AG04449 (cell line): ENCODE measurements at regions of chr11 and their contacts with region 1.

Region 1: GRCh38 chr11:925496-926321 is at the start of gene AP2A2:
- DNase-seq: no peak
- H3K4me3 ChIP-seq: peak within 1 kb of the TSS; percentile 79
- CTCF ChIP-seq: peak; percentile 75

Region 2: DNA sequence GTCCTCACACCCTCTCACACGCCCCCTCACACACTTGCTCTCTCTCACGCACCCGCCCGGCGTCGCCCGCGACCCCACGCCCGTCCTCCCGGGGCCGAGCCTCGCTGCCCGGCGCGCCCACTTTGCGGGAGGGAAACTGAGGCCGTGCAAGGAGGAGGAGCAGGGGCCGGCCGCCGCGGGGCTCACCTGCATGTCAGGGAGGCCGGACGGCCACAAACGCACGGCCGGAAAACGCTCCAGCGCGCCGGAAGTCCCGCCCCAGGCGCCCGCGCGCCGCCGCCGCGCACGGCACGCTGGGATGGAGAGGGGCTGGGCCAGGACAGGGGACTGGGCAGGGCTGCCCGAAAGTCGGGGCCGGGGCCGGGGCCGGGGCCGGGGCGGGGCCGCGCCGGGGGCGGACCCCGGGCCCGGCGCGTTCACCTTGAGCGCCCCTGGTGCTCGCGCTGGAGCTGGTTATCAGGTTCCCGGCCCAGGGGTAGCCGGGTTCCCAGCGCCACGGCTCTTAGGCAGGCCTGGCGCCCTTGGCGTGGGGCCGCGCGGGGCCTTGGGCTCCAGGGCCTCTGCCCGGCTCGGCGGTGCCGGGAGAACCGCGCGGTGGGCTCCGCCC is 15.0 kb before region 1 on chr11 and contains the start of gene CHID1:
- CTCF ChIA-PET with region 1: interaction called, 35 read pairs
- POLR2A ChIA-PET with region 1: no interaction called
- DNase-seq: no peak
- H3K4me3 ChIP-seq: peak within 1 kb of the TSS; percentile 85
- CTCF ChIP-seq: no peak

Region 3: DNA sequence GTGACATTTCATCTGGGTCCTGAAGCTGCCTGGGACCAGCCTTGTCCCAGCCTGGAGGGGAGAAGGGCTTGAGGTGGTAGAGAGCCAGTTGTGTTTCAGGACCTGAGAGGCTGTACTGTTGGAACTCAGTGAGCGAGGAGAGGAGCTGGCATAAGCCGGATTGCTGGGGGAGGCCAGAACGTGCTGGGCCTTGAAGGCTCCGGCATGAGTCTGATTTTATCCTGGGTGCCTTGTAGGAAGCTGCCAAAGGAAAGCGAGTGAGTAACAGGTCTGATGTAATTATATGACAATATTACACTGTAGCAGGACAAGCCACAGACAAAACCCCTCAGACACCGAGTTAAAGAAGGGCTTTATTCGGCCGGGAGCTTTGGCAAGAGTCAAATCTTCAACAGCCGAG is 17.1 kb after region 1 on chr11:
- CTCF ChIA-PET with region 1: interaction called, 38 read pairs
- POLR2A ChIA-PET with region 1: no interaction called
- DNase-seq: no peak
- H3K4me3 ChIP-seq: no peak overlapping the region
- CTCF ChIP-seq: no peak